Cardiac septum (tissue), 1 donor: ENCODE measurements at regions of chr1 and their contacts with region 1.

Region 1: GRCh38 chr1:46991083-46991923 is 32.2 kb upstream of the CYP4X1 start:
- DNase-seq: no peak

Region 2: GRCh38 chr1:46747683-46748288 is 243.5 kb before region 1 on chr1:
- intact Hi-C with region 1: loop called (anchors 5 kb)
- DNase-seq: no peak

Region 3: DNA sequence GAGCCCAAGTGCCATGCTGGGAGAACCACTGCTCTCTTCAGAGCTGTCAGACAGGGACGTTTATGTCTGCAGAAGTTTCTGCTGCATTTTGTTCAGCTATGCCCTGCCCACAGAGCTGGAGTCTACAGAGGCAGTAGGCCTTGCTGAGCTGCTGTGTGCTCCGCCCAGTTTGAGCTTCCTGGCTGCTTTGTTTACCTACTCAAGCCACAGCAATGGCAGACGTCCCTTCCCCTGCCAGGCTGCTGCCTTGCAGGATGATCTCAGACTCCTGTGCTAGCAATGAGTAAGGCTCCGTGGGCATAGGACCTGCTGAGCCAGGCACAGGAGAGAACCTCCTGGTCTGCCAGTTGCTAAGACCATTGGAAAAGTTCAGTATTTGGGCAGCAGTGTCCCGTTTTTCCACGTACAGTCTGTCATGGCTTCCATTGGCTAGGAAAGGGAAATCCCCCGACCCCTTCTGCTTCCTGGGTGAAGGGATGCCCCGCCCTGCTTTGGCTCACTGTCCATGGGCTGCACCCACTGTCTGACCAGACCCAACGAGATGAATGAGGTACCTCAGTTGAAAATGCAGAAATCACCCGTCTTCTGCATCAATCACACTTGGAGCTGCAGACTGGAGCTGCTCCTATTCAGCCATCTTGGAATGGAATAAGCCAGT is 160.5 kb before region 1 on chr1:
- intact Hi-C with region 1: no loop called
- DNase-seq: no peak

Region 4: GRCh38 chr1:46927249-46927835 is 64.0 kb before region 1 on chr1:
- intact Hi-C with region 1: no loop called
- DNase-seq: no peak